Sigmoid colon (tissue), 7 donors: ENCODE measurements at regions of chr5 and their contacts with region 1.

Region 1: DNA sequence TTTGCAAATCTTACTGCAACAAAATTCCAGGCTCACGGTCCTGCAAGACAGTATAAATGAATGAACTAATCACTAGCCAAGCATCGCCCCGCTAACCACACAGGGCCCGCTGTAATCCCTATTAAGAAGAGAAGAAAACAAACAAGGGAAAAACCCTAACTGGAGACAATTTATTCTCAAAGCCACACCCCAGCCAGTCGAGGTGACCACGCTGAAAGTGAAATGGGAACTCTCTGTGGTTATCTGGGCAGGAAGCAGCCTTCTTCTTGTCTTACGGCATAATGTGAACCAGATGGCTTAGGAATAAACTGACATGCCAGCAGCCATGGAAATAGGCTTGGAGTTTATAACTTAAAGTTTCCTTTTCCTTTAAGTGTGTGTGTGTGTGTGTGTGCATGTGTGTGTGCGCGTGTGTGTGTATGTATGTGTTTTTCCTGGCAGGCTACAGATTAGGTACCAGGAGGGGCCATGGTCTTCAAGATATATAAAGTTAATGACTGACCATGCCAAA is 120.2 kb downstream of the SEMA6A start:
- DNase-seq: no peak
- H3K4me3 ChIP-seq: no peak overlapping the region
- H3K27ac ChIP-seq: peak overlapping the region in 3 of 4 donors; percentile 0 to 30 (median 26)
- H3K4me1 ChIP-seq: peaks cover 0 to 23% (median 16%) of the 10 kb centered on the region in 4 donors
- H3K27me3 ChIP-seq: no peaks in the 10 kb centered on the region
- CTCF ChIP-seq: no peak
- EP300 ChIP-seq: no peak
- POLR2A ChIP-seq: no peak

Region 2: GRCh38 chr5:116137544-116138378 is 316.7 kb before region 1 on chr5:
- intact Hi-C with region 1: loop called (anchors 10 kb)
- DNase-seq: no peak
- H3K4me3 ChIP-seq: no peak overlapping the region
- H3K27ac ChIP-seq: no peak overlapping the region
- H3K4me1 ChIP-seq: peaks cover 0 to 2% (median 0%) of the 10 kb centered on the region in 4 donors
- H3K27me3 ChIP-seq: no peaks in the 10 kb centered on the region
- CTCF ChIP-seq: peak; percentile 58 to 78 (median 68)
- EP300 ChIP-seq: no peak
- POLR2A ChIP-seq: no peak

Region 3: GRCh38 chr5:116237912-116238500 is 216.5 kb before region 1 on chr5:
- intact Hi-C with region 1: no loop called
- DNase-seq: no peak
- H3K4me3 ChIP-seq: no peak overlapping the region
- H3K27ac ChIP-seq: no peak overlapping the region
- H3K4me1 ChIP-seq: peaks cover 0 to 31% (median 18%) of the 10 kb centered on the region in 4 donors
- H3K27me3 ChIP-seq: no peaks in the 10 kb centered on the region
- CTCF ChIP-seq: no peak
- EP300 ChIP-seq: no peak
- POLR2A ChIP-seq: no peak

Region 4: GRCh38 chr5:116374434-116374852 is 80.0 kb before region 1 on chr5:
- intact Hi-C with region 1: no loop called
- DNase-seq: no peak
- H3K4me3 ChIP-seq: no peak overlapping the region
- H3K27ac ChIP-seq: no peak overlapping the region
- H3K4me1 ChIP-seq: peaks cover 0 to 3% (median 0%) of the 10 kb centered on the region in 4 donors
- H3K27me3 ChIP-seq: no peaks in the 10 kb centered on the region
- CTCF ChIP-seq: no peak
- EP300 ChIP-seq: no peak
- POLR2A ChIP-seq: no peak